Lower leg skin (tissue), 4 donors: ENCODE measurements at regions of chr21 and their contacts with region 1.

Region 1: GRCh38 chr21:14241297-14241696 is 25.3 kb downstream of the RBM11 start:
- DNase-seq: no peak
- H3K4me3 ChIP-seq: no peak overlapping the region
- CTCF ChIP-seq: no peak
- POLR2A ChIP-seq: no peak

Region 2: GRCh38 chr21:14086553-14086952 is 154.7 kb before region 1 on chr21:
- intact Hi-C with region 1: no loop called
- DNase-seq: no peak
- H3K4me3 ChIP-seq: no peak overlapping the region
- CTCF ChIP-seq: no peak
- POLR2A ChIP-seq: no peak

Region 3: GRCh38 chr21:15592271-15592860 is 1351.1 kb after region 1 on chr21:
- intact Hi-C with region 1: loop called (anchors 10 kb)
- DNase-seq: no peak
- H3K4me3 ChIP-seq: no peak overlapping the region
- CTCF ChIP-seq: no peak
- POLR2A ChIP-seq: no peak